CD4-positive, alpha-beta memory T cell (primary cell): ENCODE measurements at regions of chr2 and their contacts with region 1.

Region 1: GRCh38 chr2:222939208-222939856 is 78.5 kb downstream of the ACSL3 start:
- DNase-seq: peak in 4 of 5 donors; percentile 33 to 45 (median 38)
- H3K4me3 ChIP-seq: no peak overlapping the region
- H3K4me3 Mint-ChIP-seq: peak overlapping the region in 1 of 8 donors; percentile 9
- H3K27ac ChIP-seq: no peak overlapping the region
- H3K27ac Mint-ChIP-seq: no peak overlapping the region
- H3K4me1 ChIP-seq: no peaks in the 10 kb centered on the region
- H3K4me1 Mint-ChIP-seq: peaks cover 0 to 1% (median 0%) of the 10 kb centered on the region in 4 donors
- H3K27me3 ChIP-seq: no peaks in the 10 kb centered on the region
- H3K27me3 Mint-ChIP-seq: no peaks in the 10 kb centered on the region

Region 2: DNA sequence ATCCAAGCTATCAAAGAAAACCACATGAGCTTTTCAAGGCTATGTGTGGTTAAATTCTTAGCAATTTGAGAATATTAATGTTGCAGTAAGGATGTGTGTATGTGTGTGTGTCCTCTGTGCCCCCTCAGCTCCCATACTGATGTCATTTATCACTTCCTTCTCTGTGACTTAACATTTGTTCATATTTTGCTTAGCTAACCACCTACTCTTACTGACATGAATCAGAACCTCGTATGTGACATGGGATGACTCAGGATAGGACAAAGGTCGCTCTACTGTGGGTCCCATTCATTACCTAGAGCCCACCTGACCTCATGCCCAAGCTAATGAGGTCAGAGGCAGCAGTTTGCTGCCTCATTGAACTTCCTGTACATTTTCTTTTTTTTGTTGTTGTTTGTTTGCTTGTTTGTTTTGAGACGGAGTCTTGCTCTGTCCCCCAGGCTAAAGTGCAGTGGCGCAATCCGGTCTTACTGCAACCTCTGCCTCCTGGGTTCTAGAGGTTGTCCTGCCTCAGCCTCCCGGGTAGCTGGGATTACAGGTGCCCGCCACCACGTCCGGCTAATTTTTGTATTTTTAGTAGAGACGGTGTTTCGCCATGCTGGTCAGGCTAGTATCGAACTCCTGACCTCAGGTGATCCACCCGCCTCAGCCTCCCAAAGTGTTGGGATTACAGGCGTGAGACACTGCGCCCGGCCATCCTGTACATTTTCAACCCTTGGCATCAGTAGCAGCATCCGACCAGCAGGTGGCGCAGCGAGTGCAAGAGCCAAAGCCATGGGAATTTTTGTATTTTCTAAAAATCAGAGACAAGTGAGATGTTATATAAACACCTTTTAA is 231.4 kb before region 1 on chr2:
- CTCF ChIA-PET with region 1: interaction called, 14 read pairs
- POLR2A ChIA-PET with region 1: no interaction called
- intact Hi-C with region 1: loop called (anchors 1 kb)
- DNase-seq: peak; percentile 53 to 64 (median 59)
- H3K4me3 ChIP-seq: no peak overlapping the region
- H3K4me3 Mint-ChIP-seq: no peak overlapping the region
- H3K27ac ChIP-seq: no peak overlapping the region
- H3K27ac Mint-ChIP-seq: peak overlapping the region in 1 of 7 donors; percentile 48
- H3K4me1 ChIP-seq: peaks cover 6% of the 10 kb centered on the region
- H3K4me1 Mint-ChIP-seq: no peaks in the 10 kb centered on the region
- H3K27me3 ChIP-seq: no peaks in the 10 kb centered on the region
- H3K27me3 Mint-ChIP-seq: peaks cover 29 to 36% of the 10 kb centered on the region in 2 donors

Region 3: DNA sequence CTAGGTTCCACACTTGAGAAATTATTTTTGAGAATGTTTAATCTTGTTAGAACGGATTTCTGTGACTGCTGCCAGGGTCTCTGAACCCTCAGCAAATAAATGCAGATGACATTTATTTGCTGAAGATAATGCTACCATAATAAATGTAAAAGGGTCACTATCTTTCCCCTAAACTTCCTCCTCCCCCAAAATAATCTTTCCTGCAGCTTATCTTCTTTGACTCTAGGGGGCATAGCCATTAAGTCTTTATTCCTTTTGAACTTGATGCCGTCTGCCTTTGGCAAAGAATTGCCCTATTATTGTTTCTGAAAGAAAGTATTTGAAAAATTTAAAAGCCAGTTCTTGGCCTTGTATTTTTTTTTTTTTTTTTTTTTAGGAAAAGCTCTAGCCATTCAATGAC is 142.1 kb before region 1 on chr2:
- CTCF ChIA-PET with region 1: no interaction called
- POLR2A ChIA-PET with region 1: no interaction called
- intact Hi-C with region 1: loop called (anchors 1 kb)
- DNase-seq: no peak
- H3K4me3 ChIP-seq: no peak overlapping the region
- H3K4me3 Mint-ChIP-seq: no peak overlapping the region
- H3K27ac ChIP-seq: no peak overlapping the region
- H3K27ac Mint-ChIP-seq: no peak overlapping the region
- H3K4me1 ChIP-seq: no peaks in the 10 kb centered on the region
- H3K4me1 Mint-ChIP-seq: no peaks in the 10 kb centered on the region
- H3K27me3 ChIP-seq: no peaks in the 10 kb centered on the region
- H3K27me3 Mint-ChIP-seq: peaks cover 0 to 3% of the 10 kb centered on the region in 2 donors

Region 4: DNA sequence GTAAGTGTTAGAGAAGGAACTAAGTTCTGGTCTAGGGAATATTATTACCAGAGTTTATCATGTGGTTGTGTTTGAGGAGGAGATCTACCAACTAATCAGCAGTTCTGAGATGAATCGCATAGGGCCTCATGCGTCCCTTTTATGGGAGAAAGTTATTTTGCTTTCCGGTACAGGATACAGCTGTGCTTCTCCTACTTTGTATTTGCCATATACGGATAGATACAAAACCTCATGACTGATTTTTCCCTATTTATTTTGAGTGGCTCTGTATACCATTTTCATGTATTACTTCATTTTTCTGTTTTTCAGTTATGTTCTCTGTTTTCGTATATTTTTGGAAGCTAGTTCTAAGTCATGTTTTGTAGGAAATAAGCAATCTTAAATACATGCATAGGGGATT is 11.7 kb before region 1 on chr2:
- CTCF ChIA-PET with region 1: interaction called, 17 read pairs
- POLR2A ChIA-PET with region 1: no interaction called
- intact Hi-C with region 1: no loop called
- DNase-seq: no peak
- H3K4me3 ChIP-seq: no peak overlapping the region
- H3K4me3 Mint-ChIP-seq: no peak overlapping the region
- H3K27ac ChIP-seq: no peak overlapping the region
- H3K27ac Mint-ChIP-seq: no peak overlapping the region
- H3K4me1 ChIP-seq: no peaks in the 10 kb centered on the region
- H3K4me1 Mint-ChIP-seq: no peaks in the 10 kb centered on the region
- H3K27me3 ChIP-seq: no peaks in the 10 kb centered on the region
- H3K27me3 Mint-ChIP-seq: no peaks in the 10 kb centered on the region